Esophagus muscularis mucosa (tissue), 4 donors: ENCODE measurements at regions of chr11 and their contacts with region 1.

Region 1: GRCh38 chr11:123020968-123021367 is 39.3 kb upstream of the BSX start:
- DNase-seq: no peak
- H3K4me3 ChIP-seq: no peak overlapping the region
- H3K27ac ChIP-seq: no peak overlapping the region
- H3K4me1 ChIP-seq: peaks cover 0 to 5% (median 4%) of the 10 kb centered on the region in 4 donors
- H3K27me3 ChIP-seq: peaks cover 0 to 20% (median 0%) of the 10 kb centered on the region in 4 donors
- CTCF ChIP-seq: peak; percentile 14 to 56 (median 24)
- EP300 ChIP-seq: no peak
- POLR2A ChIP-seq: no peak

Region 2: DNA sequence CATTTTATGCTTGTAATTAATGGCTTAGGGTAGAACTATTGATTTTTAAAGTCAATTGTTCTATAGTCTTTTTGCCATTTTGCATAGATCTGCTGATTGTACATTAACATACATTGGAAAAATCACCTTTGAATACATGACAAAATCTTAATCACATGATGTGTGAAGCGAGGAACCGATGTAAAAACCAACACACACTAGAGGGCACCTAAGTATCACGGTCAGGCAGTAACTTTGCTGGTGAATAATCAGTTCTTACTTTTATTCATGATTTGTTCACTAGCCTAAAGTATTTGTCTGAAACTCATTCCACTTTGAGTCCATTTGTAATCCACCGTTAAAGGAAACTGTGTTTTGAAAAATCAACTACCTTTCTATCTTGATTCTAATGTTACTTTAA is 110.2 kb before region 1 on chr11:
- intact Hi-C with region 1: loop called (anchors 5 kb)
- DNase-seq: no peak
- H3K4me3 ChIP-seq: no peak overlapping the region
- H3K27ac ChIP-seq: no peak overlapping the region
- H3K4me1 ChIP-seq: no peaks in the 10 kb centered on the region
- H3K27me3 ChIP-seq: no peaks in the 10 kb centered on the region
- CTCF ChIP-seq: peak in 2 of 3 experiments; percentile 9 to 20
- EP300 ChIP-seq: no peak
- POLR2A ChIP-seq: no peak

Region 3: GRCh38 chr11:123282597-123282996 is 261.6 kb after region 1 on chr11:
- intact Hi-C with region 1: no loop called
- DNase-seq: no peak
- H3K4me3 ChIP-seq: no peak overlapping the region
- H3K27ac ChIP-seq: no peak overlapping the region
- H3K4me1 ChIP-seq: no peaks in the 10 kb centered on the region
- H3K27me3 ChIP-seq: peaks cover 0 to 15% (median 0%) of the 10 kb centered on the region in 4 donors
- CTCF ChIP-seq: no peak
- EP300 ChIP-seq: no peak
- POLR2A ChIP-seq: no peak